Activated B cell treated with CpG ODN at 0.5 μM for 24 hours (primary cell): ENCODE measurements at regions of chr1 and their contacts with region 1.

Region 1: GRCh38 chr1:71080739-71081696 is at the start of gene ZRANB2:
- DNase-seq: peak; percentile 76
- ATAC-seq: peak; percentile 97
- H3K4me3 Mint-ChIP-seq: peak within 1 kb of the TSS; percentile 98
- H3K27ac Mint-ChIP-seq: peak within 1 kb of the TSS; percentile 99
- H3K4me1 Mint-ChIP-seq: peaks cover 29% of the 10 kb centered on the region
- H3K27me3 Mint-ChIP-seq: peaks cover 19% of the 10 kb centered on the region
- CTCF ChIP-seq: no peak
- total RNA-seq, gene ZRANB2: 118 and 130 TPM in 2 replicates

Region 2: DNA sequence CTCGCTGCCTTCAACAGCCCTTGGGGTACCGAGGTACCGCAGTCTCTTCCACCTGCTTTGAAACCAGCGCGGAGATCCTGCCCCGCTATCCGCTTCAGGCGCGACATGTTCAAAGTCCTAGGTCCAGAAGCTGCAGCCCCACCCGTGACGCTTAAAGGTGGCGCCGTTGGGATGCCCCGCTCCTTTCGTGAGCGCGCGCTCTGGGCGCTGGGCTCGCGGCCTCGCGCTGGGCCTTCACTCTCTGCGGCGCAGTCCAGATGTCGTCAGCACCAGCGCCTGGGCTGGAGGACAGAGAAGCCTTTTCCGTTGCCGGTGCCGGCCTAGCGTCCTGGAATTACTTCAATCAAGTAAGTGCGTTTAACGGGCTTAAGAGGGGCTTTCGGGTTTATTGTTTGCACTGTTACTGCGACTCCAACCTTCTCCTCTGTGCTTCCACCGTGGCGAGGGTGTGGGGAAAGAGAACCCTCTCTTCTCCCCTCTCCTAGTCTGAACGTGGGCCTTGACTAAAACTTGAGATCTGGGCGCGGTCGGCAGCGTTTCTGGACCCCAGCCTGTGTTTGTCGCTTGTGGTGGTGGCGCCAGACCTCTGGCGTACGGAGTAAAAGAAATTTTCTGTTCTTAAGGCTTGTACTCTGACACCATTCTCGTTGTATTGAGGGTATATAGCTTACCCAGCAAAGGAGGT is 875.4 kb before region 1 on chr1 and contains the start of gene LRRC40:
- CTCF ChIA-PET with region 1: interaction called, 4 read pairs
- POLR2A ChIA-PET with region 1: interaction called, 19 read pairs
- intact Hi-C with region 1: loop called (anchors 1 kb)
- DNase-seq: peak; percentile 98
- ATAC-seq: peak; percentile 96
- H3K4me3 Mint-ChIP-seq: peak within 1 kb of the TSS; percentile 99
- H3K27ac Mint-ChIP-seq: peak within 1 kb of the TSS; percentile 97
- H3K4me1 Mint-ChIP-seq: peaks cover 73% of the 10 kb centered on the region
- H3K27me3 Mint-ChIP-seq: no peaks in the 10 kb centered on the region
- CTCF ChIP-seq: no peak
- total RNA-seq, gene LRRC40: 15.8 and 16.7 TPM in 2 replicates

Region 3: GRCh38 chr1:70354332-70355110 is 726.5 kb before region 1 on chr1 and contains the start of gene ANKRD13C:
- CTCF ChIA-PET with region 1: interaction called, 4 read pairs
- POLR2A ChIA-PET with region 1: interaction called, 7 read pairs
- intact Hi-C with region 1: loop called (anchors 1 kb)
- DNase-seq: peak; percentile 74
- ATAC-seq: peak; percentile 93
- H3K4me3 Mint-ChIP-seq: peak within 1 kb of the TSS; percentile 99
- H3K27ac Mint-ChIP-seq: peak within 1 kb of the TSS; percentile 98
- H3K4me1 Mint-ChIP-seq: peaks cover 44% of the 10 kb centered on the region
- H3K27me3 Mint-ChIP-seq: no peaks in the 10 kb centered on the region
- CTCF ChIP-seq: no peak
- total RNA-seq, gene ANKRD13C: 20.9 and 21.2 TPM in 2 replicates

Region 4: DNA sequence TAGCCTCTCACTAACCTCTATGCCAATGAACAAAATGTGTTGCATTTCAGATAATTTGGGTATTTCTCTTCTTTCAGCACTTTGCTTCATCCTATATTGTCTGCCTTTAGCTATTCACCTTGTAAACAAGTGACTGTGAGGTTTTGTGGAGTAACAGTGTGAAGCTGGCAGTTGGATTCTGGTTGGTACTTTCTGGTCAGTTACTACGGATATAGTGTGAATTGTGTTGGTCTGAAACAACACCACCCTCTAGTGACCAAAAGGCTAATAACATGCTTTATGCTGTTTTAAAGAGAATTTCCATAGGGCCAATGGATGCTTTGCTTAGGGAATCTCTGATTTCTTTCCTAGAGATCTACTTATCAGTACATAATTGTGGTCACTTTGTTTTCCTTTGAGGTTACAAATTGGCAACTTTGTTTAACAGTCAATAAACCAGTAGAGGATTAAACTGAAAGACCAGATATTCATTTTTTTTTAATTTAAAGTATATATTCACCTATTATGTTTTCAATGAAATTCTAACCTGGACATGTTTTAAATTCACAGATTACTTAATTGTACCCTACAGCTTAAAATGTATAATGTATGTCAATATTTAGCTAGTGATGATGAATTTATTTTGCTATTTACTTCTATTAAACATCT is 30.9 kb before region 1 on chr1:
- CTCF ChIA-PET with region 1: interaction called, 3 read pairs
- POLR2A ChIA-PET with region 1: no interaction called
- intact Hi-C with region 1: loop called (anchors 1 kb)
- DNase-seq: no peak
- ATAC-seq: peak; percentile 52
- H3K4me3 Mint-ChIP-seq: no peak overlapping the region
- H3K27ac Mint-ChIP-seq: no peak overlapping the region
- H3K4me1 Mint-ChIP-seq: peaks cover 21% of the 10 kb centered on the region
- H3K27me3 Mint-ChIP-seq: peaks cover 34% of the 10 kb centered on the region
- CTCF ChIP-seq: no peak

Region 5: GRCh38 chr1:71200503-71200902 is 119.5 kb after region 1 on chr1:
- CTCF ChIA-PET with region 1: no interaction called
- POLR2A ChIA-PET with region 1: no interaction called
- intact Hi-C with region 1: no loop called
- DNase-seq: no peak
- ATAC-seq: no peak
- H3K4me3 Mint-ChIP-seq: no peak overlapping the region
- H3K27ac Mint-ChIP-seq: no peak overlapping the region
- H3K4me1 Mint-ChIP-seq: no peaks in the 10 kb centered on the region
- H3K27me3 Mint-ChIP-seq: no peaks in the 10 kb centered on the region
- CTCF ChIP-seq: no peak

Region 6: GRCh38 chr1:72282271-72283021 is 1201.4 kb after region 1 on chr1 and contains the start of gene NEGR1:
- CTCF ChIA-PET with region 1: no interaction called
- POLR2A ChIA-PET with region 1: no interaction called
- intact Hi-C with region 1: loop called (anchors 5 kb)
- DNase-seq: peak; percentile 29
- ATAC-seq: peak; percentile 88
- H3K4me3 Mint-ChIP-seq: peak within 1 kb of the TSS; percentile 79
- H3K27ac Mint-ChIP-seq: peak within 1 kb of the TSS; percentile 57
- H3K4me1 Mint-ChIP-seq: peaks cover 17% of the 10 kb centered on the region
- H3K27me3 Mint-ChIP-seq: peaks cover 13% of the 10 kb centered on the region
- CTCF ChIP-seq: no peak
- total RNA-seq, gene NEGR1: not detected in 2 replicates